ENCODE measurements at regions of chr4 and their contacts with region 1.

Region 1: GRCh38 chr4:186137196-186137794 is 32.8 kb downstream of the FAM149A start:
- DNase-seq: no peak
- ATAC-seq: peak; percentile 33
- H3K4me3 ChIP-seq: no peak overlapping the region
- H3K27ac ChIP-seq: no peak overlapping the region
- H3K4me1 ChIP-seq: no peaks in the 10 kb centered on the region
- H3K27me3 ChIP-seq: no peaks in the 10 kb centered on the region

Region 2: GRCh38 chr4:185634066-185634652 is 503.1 kb before region 1 on chr4:
- intact Hi-C with region 1: loop called in 1 of 2 experiments (anchors 10 kb)
- DNase-seq: no peak
- ATAC-seq: no peak
- H3K4me3 ChIP-seq: no peak overlapping the region
- H3K27ac ChIP-seq: no peak overlapping the region
- H3K4me1 ChIP-seq: no peaks in the 10 kb centered on the region
- H3K27me3 ChIP-seq: no peaks in the 10 kb centered on the region

Region 3: DNA sequence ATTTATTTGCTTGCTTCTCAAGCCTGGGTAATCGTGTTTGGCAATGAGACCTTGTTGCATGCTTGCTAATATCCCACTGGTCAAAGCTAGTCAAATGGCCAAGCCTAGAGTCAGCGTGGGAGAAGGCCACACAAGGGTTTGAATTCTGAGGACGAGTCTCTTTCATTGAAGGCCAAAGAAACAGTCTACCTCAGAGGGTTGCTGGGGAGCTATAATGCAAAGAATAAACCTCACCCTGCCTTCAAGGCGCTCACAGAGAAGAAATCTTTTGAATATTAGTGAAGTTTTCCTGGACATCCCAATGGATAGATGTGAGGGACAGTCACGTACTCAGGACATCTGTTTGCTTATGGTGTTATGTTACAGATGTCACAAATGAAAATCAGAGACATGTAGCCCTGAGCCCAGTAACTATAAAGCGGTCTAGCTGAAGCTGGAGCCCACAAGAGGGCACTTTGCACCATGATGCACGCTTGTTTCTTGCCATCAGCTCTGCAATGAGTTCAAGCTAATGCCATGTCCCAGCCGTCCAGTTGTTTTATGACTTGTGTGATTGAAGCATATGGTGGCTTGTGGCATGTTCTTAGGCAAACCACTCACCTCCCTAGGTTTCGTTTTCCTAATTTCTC is 69.4 kb before region 1 on chr4:
- intact Hi-C with region 1: loop called (anchors 2 to 5 kb)
- DNase-seq: peak in 1 of 2 donors; percentile 73
- ATAC-seq: peak; percentile 85
- H3K4me3 ChIP-seq: peak overlapping the region; percentile 99
- H3K27ac ChIP-seq: no peak overlapping the region
- H3K4me1 ChIP-seq: no peaks in the 10 kb centered on the region
- H3K27me3 ChIP-seq: no peaks in the 10 kb centered on the region

Region 4: GRCh38 chr4:186078980-186079695 is 58.2 kb before region 1 on chr4:
- intact Hi-C with region 1: no loop called
- DNase-seq: no peak
- ATAC-seq: no peak
- H3K4me3 ChIP-seq: no peak overlapping the region
- H3K27ac ChIP-seq: no peak overlapping the region
- H3K4me1 ChIP-seq: no peaks in the 10 kb centered on the region
- H3K27me3 ChIP-seq: no peaks in the 10 kb centered on the region

Region 5: DNA sequence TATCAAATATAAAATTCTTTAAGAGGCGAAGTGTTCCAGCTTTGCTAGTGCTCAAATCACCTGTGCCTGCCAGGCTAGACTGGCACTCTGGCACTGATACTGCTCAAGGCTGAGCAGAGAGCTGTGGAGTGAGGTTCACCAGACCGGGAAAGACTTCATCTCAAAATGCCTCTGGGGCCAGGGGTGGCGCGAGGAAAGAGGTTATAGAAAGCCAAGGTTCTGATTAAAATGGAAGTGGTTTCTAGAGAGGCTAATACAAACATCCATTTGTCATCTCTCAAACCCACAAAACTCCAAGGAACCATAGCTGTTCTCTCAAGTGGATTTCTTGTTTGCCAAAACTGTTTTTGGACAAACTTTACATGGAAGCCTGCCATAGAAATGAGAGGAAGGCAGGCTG is 170.2 kb after region 1 on chr4:
- intact Hi-C with region 1: no loop called
- DNase-seq: no peak
- ATAC-seq: no peak
- H3K4me3 ChIP-seq: no peak overlapping the region
- H3K27ac ChIP-seq: no peak overlapping the region
- H3K4me1 ChIP-seq: no peaks in the 10 kb centered on the region
- H3K27me3 ChIP-seq: no peaks in the 10 kb centered on the region